Heart left ventricle (tissue), 16 donors: ENCODE measurements at regions of chr9 and their contacts with region 1.

Region 1: DNA sequence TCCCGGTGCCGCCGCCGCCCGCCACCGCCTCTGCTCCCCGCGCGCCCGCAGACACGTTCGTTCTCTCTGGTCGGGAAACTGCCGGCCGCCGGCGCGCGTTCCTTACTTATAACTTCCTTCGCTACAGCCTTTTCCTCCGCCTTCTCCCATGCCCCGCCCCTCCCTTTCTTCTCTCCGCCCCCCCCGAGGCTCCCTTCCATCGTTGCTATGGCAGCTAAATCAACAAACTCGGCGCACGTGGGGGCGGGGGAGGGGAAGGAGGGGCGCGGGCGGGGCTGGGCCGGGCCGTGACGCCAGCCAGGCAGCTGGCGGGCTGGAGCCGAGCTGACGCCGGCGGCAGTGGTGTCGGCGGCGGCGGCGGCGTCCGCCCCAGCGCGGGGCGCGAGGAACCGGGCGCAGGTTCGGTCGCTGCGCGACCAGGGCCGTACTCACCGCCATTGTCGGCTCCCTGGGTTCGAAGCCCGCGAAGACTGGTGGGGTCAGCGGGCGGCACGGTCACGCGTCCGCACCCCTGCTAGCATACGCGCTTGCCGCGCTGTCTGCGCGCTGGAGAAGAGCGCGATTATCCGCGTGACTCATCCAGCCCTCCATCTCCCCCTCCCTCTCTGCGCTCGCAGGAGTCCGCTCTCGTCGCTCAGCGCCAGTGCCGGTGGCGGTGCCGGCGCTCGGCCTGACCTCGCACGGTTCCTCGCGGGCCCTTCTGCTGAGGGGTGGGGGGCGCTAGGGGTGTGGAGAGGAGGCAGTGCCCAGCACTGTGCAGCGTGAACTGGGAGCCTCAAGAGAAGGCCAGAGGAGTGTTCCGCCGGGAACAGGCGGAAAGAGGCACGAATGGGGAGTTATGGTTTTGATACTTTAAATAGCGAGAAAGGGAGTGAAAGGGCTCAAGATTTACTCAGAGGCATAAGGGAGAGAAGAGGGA is at the start of gene KLF4:
- DNase-seq: peak; percentile 92 to 94 (median 93)
- ATAC-seq: peak; percentile 71 to 91 (median 83)
- H3K4me3 ChIP-seq: peak within 1 kb of the TSS; percentile 64 to 92 (median 81)
- H3K27ac ChIP-seq: peak within 1 kb of the TSS; percentile 90 to 99 (median 95)
- H3K4me1 ChIP-seq: peaks cover 0 to 47% (median 15%) of the 10 kb centered on the region in 12 donors
- H3K27me3 ChIP-seq: peaks cover 0 to 16% (median 0%) of the 10 kb centered on the region in 9 donors
- CTCF ChIP-seq: peak in 1 of 12 donors; percentile 3
- POLR2A ChIP-seq: peak in 1 of 2 donors; percentile 92
- total RNA-seq, gene KLF4: 17.1 to 63.3 (median 21.3) TPM

Region 2: GRCh38 chr9:107587191-107587963 is 97.4 kb after region 1 on chr9:
- intact Hi-C with region 1: loop called in 2 of 10 experiments (anchors 5 kb)
- DNase-seq: peak; percentile 65 to 77 (median 75)
- ATAC-seq: peak; percentile 85 to 94 (median 86)
- H3K4me3 ChIP-seq: peak overlapping the region in 10 of 12 donors; percentile 10 to 49 (median 34)
- H3K27ac ChIP-seq: peak overlapping the region; percentile 66 to 91 (median 85)
- H3K4me1 ChIP-seq: peaks cover 0 to 24% (median 10%) of the 10 kb centered on the region in 12 donors
- H3K27me3 ChIP-seq: no peaks in the 10 kb centered on the region
- CTCF ChIP-seq: no peak
- POLR2A ChIP-seq: peak in 1 of 2 donors; percentile 14

Region 3: DNA sequence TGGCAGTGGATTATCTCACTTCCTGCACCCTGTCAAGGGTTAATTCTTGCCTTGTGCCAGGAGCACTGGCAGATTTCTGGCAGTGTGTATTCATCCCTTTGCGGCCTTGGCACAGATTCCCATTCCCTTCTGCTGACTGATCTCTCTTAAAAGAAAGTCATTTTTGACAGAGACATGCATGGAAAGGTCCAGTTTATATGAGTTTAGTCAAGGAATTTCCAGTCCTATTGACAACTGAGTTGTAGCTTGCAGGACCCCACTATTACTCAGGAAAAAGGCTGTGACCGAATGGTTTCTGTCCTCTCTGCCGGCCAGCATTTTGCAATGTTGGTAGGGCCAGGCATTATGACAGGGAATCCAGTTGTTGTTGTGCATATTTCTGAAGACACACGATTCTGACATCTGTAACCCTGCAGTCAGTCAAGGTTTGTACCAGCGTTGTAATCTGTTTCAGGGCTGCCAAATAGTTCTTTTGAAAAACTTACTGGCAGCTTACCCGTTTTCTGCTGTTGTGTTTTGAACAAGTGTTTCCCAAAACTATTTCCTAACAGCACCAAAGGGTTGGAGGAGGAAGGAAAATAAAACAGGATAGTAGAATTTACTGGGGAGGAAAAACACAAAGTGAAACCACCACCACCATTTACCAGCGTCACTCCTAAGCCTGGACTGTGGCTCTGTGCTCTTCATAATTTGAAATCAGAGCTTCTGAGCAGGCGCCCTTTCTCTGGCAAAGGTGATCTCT is 243.0 kb after region 1 on chr9:
- intact Hi-C with region 1: loop called in 3 of 10 experiments (anchors 10 kb)
- DNase-seq: peak in 3 of 5 donors; percentile 37 to 59 (median 55)
- ATAC-seq: peak; percentile 38 to 74 (median 62)
- H3K4me3 ChIP-seq: peak overlapping the region in 10 of 12 donors; percentile 0 to 38 (median 13)
- H3K27ac ChIP-seq: peak overlapping the region; percentile 66 to 91 (median 83)
- H3K4me1 ChIP-seq: peaks cover 0 to 37% (median 26%) of the 10 kb centered on the region in 12 donors
- H3K27me3 ChIP-seq: no peaks in the 10 kb centered on the region
- CTCF ChIP-seq: no peak
- POLR2A ChIP-seq: no peak

Region 4: GRCh38 chr9:107782381-107782780 is 292.4 kb after region 1 on chr9:
- intact Hi-C with region 1: no loop called
- DNase-seq: no peak
- ATAC-seq: no peak
- H3K4me3 ChIP-seq: no peak overlapping the region
- H3K27ac ChIP-seq: no peak overlapping the region
- H3K4me1 ChIP-seq: peaks cover 0 to 30% (median 7%) of the 10 kb centered on the region in 12 donors
- H3K27me3 ChIP-seq: no peaks in the 10 kb centered on the region
- CTCF ChIP-seq: no peak
- POLR2A ChIP-seq: no peak

Region 5: GRCh38 chr9:108053555-108054061 is 563.7 kb after region 1 on chr9:
- intact Hi-C with region 1: loop called in 1 of 10 experiments (anchors 10 kb)
- DNase-seq: peak in 4 of 5 donors; percentile 29 to 72 (median 56)
- ATAC-seq: peak; percentile 45 to 76 (median 54)
- H3K4me3 ChIP-seq: peak overlapping the region in 1 of 12 donors; percentile 1
- H3K27ac ChIP-seq: peak overlapping the region in 8 of 12 donors; percentile 3 to 65 (median 38)
- H3K4me1 ChIP-seq: peaks cover 0 to 43% (median 14%) of the 10 kb centered on the region in 12 donors
- H3K27me3 ChIP-seq: peaks cover 0 to under 1% (median 0%) of the 10 kb centered on the region in 9 donors
- CTCF ChIP-seq: no peak
- POLR2A ChIP-seq: no peak

Region 6: DNA sequence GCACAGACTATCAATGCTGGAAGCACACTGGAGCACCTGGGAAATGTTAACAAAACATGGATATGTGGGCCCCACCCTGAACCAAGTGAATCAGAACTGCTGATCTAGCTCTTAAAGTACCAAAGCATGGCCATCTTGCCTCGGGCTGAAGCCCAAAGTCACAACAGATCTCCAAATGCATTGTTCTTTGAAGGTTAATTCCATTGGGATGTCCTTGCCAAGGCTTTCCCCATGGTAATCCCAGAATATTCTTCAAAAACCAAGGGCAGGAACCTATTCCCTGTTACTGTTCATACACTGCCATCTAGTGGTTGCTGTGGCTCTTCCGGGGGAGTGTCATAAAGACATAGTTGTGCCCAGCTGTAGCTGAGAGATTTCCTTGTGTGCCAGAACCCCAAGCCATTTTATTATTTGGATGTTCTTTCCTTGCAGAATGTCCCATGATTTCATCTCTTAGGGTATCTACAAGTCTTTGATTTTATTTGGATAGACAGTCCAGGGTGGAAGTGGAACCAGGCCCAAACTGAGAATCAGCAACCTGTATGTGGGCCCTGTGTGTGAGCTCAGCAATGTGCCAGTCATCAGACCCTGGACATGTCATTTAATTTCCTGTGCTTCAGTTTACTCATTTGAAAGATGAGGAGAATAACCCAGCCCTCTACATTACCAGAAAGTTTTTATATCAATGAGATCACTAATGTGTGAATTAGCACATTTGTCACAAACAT is 1075.9 kb after region 1 on chr9:
- intact Hi-C with region 1: loop called in 2 of 10 experiments (anchors 2 to 5 kb)
- DNase-seq: peak in 3 of 5 donors; percentile 29 to 60 (median 48)
- ATAC-seq: peak; percentile 93 to 95 (median 94)
- H3K4me3 ChIP-seq: no peak overlapping the region
- H3K27ac ChIP-seq: no peak overlapping the region
- H3K4me1 ChIP-seq: peaks cover 0 to 3% (median 0%) of the 10 kb centered on the region in 12 donors
- H3K27me3 ChIP-seq: no peaks in the 10 kb centered on the region
- CTCF ChIP-seq: peak; percentile 64 to 90 (median 85)
- POLR2A ChIP-seq: no peak